BJ (cell line): ENCODE measurements at regions of chr1 and their contacts with region 1.

Region 1: GRCh38 chr1:206912445-206913095 is 9.2 kb downstream of the FCMR start:
- DNase-seq: no peak
- H3K4me3 ChIP-seq: no peak overlapping the region
- H3K27me3 ChIP-seq: peaks cover 4% of the 10 kb centered on the region
- CTCF ChIP-seq: peak; percentile 78

Region 2: DNA sequence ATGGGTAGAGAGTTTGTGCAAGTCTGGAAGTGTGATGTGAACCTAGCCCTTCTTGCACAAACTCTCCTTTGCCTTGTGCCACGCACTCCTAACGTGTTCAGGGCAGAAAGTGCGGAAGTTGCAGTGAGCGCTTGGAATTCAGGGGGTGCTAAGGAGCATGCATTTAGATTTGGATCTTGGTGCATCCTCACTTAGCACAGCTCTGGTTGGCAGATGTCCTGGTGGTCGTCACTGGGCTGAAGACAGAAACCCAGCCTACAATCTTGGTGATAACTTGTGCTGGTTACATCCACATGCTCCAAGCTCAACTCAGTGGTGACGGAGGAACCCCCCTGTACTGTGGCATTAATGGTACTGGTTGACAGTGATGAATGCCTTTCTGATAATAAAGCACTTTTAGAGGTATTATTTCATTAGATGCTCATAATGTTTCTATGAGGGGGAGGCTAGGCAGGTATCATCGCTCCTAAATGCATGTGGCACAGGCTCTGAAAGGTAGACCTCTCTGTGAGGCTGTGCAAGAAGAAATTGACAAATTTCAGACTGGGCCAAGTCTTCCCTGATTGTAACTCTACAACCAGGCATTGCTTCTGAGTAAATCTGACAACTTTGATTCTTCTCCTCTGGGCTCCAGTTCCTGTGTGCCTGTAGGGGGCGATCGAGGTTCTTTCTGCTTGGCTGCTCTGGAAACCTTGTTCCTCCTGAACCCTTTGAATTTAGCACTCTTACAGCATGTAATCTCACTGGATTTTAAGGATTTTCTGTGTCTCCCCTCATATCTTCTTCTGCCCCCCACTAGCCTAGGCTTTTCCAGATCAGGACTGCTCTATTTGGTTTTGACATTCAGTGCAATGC is 187.2 kb before region 1 on chr1:
- CTCF ChIA-PET with region 1: interaction called, 46 read pairs
- POLR2A ChIA-PET with region 1: no interaction called
- DNase-seq: no peak
- H3K4me3 ChIP-seq: no peak overlapping the region
- H3K27me3 ChIP-seq: no peaks in the 10 kb centered on the region
- CTCF ChIP-seq: peak; percentile 79

Region 3: GRCh38 chr1:206803221-206803730 is 109.3 kb before region 1 on chr1:
- CTCF ChIA-PET with region 1: interaction called, 127 read pairs
- POLR2A ChIA-PET with region 1: no interaction called
- DNase-seq: no peak
- H3K4me3 ChIP-seq: no peak overlapping the region
- H3K27me3 ChIP-seq: 0 out of 2 replicates have a peak, but pooled peaks cover 1% of the 10 kb centered on the region
- CTCF ChIP-seq: no peak

Region 4: GRCh38 chr1:206816390-206817287 is 95.9 kb before region 1 on chr1:
- CTCF ChIA-PET with region 1: interaction called, 127 read pairs
- POLR2A ChIA-PET with region 1: no interaction called
- DNase-seq: no peak
- H3K4me3 ChIP-seq: no peak overlapping the region
- H3K27me3 ChIP-seq: no peaks in the 10 kb centered on the region
- CTCF ChIP-seq: no peak

Region 5: GRCh38 chr1:206895830-206896242 is 16.7 kb before region 1 on chr1:
- CTCF ChIA-PET with region 1: interaction called, 18 read pairs
- POLR2A ChIA-PET with region 1: no interaction called
- DNase-seq: peak; percentile 83
- H3K4me3 ChIP-seq: no peak overlapping the region
- H3K27me3 ChIP-seq: no peaks in the 10 kb centered on the region
- CTCF ChIP-seq: no peak

Region 6: DNA sequence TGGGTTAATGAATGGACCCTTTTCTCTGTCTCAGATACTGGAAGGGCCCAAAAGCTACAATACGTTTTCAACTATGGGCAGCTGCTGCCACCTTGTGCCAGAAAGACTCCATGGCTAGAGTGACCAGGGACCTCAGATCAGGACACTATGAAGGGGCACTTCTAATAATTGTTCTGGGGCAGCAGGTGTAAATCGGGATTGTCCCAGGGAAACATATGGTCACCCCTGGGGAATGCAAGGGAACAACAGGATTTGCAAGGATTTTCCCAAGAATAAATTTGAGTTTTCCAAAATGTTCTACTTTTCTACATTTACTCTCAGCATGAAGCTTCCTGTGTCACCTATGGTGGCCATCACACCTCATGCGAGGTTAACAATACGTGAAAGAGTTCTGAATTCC is 69.6 kb after region 1 on chr1:
- CTCF ChIA-PET with region 1: interaction called, 38 read pairs
- POLR2A ChIA-PET with region 1: no interaction called
- DNase-seq: no peak
- H3K4me3 ChIP-seq: no peak overlapping the region
- H3K27me3 ChIP-seq: peaks cover 7% of the 10 kb centered on the region
- CTCF ChIP-seq: peak; percentile 73